RWPE1 (cell line): ENCODE measurements at regions of chr9 and their contacts with region 1.

Region 1: DNA sequence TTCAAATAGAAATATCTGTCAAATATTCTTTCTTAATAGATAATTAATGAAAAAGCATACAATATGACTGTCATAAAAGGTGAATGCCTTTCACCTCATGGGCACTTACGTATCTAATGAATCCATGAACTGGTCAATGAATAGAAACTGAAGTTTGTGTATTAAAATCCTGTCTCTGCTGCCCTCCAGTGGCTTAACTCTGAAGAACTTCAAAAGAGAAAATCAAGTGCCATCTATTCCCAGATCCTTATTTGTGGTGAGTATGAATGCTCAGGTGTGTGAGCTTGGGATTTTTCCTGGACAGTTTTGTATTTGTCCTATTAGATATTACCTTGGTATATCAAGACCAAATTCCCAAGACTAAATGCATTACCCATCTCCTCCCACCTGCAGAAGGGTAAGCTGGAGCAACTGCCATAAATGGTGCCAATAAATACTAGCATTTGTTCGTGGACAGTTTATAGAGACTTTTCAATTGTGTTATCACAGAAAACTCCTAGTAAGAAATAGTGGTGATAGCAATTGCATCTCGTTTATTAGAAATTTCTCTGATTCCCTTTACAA is 44.0 kb upstream of the SVEP1 start:
- DNase-seq: peak; percentile 76
- H3K27ac ChIP-seq: no peak overlapping the region
- CTCF ChIP-seq: peak; percentile 89

Region 2: DNA sequence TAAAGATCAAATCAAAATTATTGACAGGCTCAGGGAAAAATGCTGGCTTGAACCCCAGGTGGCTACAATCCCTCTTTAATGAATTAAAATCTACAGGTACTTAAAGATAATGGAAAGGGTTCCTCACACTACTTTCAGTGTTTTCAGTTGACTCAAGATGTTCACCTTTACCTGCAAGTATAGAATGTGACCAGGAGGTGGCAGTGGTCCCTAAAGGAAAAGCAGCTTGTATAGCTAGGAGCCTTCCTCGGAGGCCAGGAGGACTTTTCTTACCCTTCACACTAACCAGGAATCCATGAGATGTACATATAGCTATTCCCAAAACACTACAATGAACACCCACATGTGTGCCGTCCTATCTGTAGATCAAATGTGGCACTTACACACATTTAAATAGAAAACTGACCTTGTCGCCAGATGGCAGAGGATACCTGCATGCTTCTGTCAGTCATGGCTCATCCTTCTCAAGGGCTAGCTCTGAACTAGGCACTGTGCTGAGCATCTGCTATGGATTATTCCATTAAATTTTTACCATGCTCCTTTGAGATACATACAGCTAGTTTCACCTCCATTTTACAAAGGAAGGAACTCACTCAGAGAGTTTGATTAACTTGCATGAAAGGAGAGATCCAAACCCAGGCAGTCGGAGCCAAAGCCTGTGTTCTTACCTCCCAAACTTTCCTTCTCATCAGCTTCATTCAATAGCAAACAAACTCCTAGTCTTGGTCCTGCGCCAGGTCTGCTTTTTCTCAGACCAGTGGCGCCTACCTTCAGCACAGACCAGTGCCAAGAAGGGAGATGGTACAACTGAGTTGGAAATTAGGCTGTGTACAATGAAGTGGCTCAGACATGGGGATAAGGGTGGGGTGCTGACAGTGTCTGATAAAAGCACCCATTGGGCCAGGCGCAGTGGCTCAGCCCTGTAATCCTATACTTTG is 440.1 kb before region 1 on chr9:
- CTCF ChIA-PET with region 1: interaction called, 19 read pairs
- POLR2A ChIA-PET with region 1: no interaction called
- DNase-seq: peak; percentile 80
- H3K27ac ChIP-seq: no peak overlapping the region
- CTCF ChIP-seq: peak; percentile 86

Region 3: GRCh38 chr9:110427497-110428104 is 195.9 kb before region 1 on chr9:
- CTCF ChIA-PET with region 1: interaction called, 15 read pairs
- POLR2A ChIA-PET with region 1: no interaction called
- DNase-seq: peak; percentile 43
- H3K27ac ChIP-seq: no peak overlapping the region
- CTCF ChIP-seq: peak; percentile 76

Region 4: GRCh38 chr9:110579034-110579861 is 44.3 kb before region 1 on chr9 and contains the start of gene SVEP1:
- CTCF ChIA-PET with region 1: interaction called, 11 read pairs
- POLR2A ChIA-PET with region 1: no interaction called
- DNase-seq: peak; percentile 42
- H3K27ac ChIP-seq: peak within 1 kb of the TSS; percentile 0; the same call in 1 of the 2 replicates
- CTCF ChIP-seq: no peak